Activated CD4-positive, alpha-beta T cell treated with anti-CD3 and anti-CD28 coated beads for 36 hours (primary cell): ENCODE measurements at regions of chr3 and their contacts with region 1.

Region 1: GRCh38 chr3:49377483-49377882 is 19.3 kb upstream of the GPX1 start:
- DNase-seq: peak; percentile 85
- ATAC-seq: peak; percentile 96
- H3K4me3 Mint-ChIP-seq: no peak overlapping the region
- H3K27ac Mint-ChIP-seq: peak overlapping the region; percentile 91
- H3K4me1 Mint-ChIP-seq: peaks cover 42% of the 10 kb centered on the region
- H3K27me3 Mint-ChIP-seq: no peaks in the 10 kb centered on the region

Region 2: GRCh38 chr3:49021813-49022687 is 355.4 kb before region 1 on chr3 and contains the start of gene NDUFAF3:
- CTCF ChIA-PET with region 1: no interaction called
- POLR2A ChIA-PET with region 1: no interaction called
- intact Hi-C with region 1: no loop called
- DNase-seq: peak; percentile 96
- ATAC-seq: peak; percentile 78
- H3K4me3 Mint-ChIP-seq: peak within 1 kb of the TSS; percentile 95
- H3K27ac Mint-ChIP-seq: peak within 1 kb of the TSS; percentile 96
- H3K4me1 Mint-ChIP-seq: peaks cover 60% of the 10 kb centered on the region
- H3K27me3 Mint-ChIP-seq: no peaks in the 10 kb centered on the region
- total RNA-seq, gene NDUFAF3: 90.8 to 108 TPM

Region 3: GRCh38 chr3:49199239-49199899 is 178.1 kb before region 1 on chr3:
- CTCF ChIA-PET with region 1: no interaction called
- POLR2A ChIA-PET with region 1: interaction called, 10 read pairs
- intact Hi-C with region 1: no loop called
- DNase-seq: peak; percentile 48
- ATAC-seq: peak; percentile 39
- H3K4me3 Mint-ChIP-seq: no peak overlapping the region
- H3K27ac Mint-ChIP-seq: no peak overlapping the region
- H3K4me1 Mint-ChIP-seq: no peaks in the 10 kb centered on the region
- H3K27me3 Mint-ChIP-seq: peaks cover 19% of the 10 kb centered on the region

Region 4: DNA sequence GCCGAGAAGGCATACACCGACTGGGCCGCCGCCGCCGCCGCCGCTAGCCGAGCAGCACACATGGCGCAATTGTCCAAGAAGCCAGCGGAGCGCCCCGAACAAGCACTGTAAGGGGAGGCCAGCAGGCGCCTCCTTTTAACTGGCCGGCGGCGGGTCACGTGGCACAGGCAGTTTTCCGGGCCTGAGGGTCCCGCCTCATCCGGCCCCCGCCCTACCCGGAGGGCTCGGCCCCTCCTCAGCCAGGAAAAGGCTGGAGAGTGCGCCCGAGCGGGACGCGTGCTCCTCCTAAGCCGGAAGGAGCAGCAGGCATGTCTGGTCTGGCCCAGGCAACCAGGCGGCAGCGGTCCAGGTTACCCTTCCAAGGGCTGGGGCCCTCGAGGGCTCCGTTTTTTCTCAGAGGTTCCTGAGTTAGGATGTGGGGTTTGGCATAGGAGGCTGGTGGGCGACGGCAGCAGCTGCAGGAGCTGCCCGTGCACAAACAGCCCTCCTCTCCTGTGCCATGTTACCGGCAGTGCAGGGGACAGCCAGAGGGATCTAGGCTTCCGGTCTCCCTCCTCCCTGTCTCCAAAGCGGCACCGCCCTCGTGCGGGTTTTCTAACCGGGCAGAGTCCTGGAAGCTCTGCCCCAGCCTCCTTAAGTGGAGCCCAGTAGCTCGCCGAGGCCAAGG is 19.1 kb before region 1 on chr3 and contains the start of gene GPX1:
- CTCF ChIA-PET with region 1: interaction called, 3 read pairs
- POLR2A ChIA-PET with region 1: interaction called, 4 read pairs
- intact Hi-C with region 1: loop called in 1 of 2 experiments (anchors 1 kb)
- DNase-seq: peak; percentile 92
- ATAC-seq: peak; percentile 85
- H3K4me3 Mint-ChIP-seq: peak within 1 kb of the TSS; percentile 94
- H3K27ac Mint-ChIP-seq: peak within 1 kb of the TSS; percentile 98
- H3K4me1 Mint-ChIP-seq: peaks cover 18% of the 10 kb centered on the region
- H3K27me3 Mint-ChIP-seq: no peaks in the 10 kb centered on the region
- total RNA-seq, gene GPX1: 182 to 306 TPM

Region 5: GRCh38 chr3:49469936-49470713 is 92.6 kb after region 1 on chr3 and contains the start of gene DAG1:
- CTCF ChIA-PET with region 1: no interaction called
- POLR2A ChIA-PET with region 1: no interaction called
- intact Hi-C with region 1: no loop called
- DNase-seq: peak; percentile 98
- ATAC-seq: peak; percentile 92
- H3K4me3 Mint-ChIP-seq: peak within 1 kb of the TSS; percentile 81
- H3K27ac Mint-ChIP-seq: peak within 1 kb of the TSS; percentile 92
- H3K4me1 Mint-ChIP-seq: peaks cover 20% of the 10 kb centered on the region
- H3K27me3 Mint-ChIP-seq: no peaks in the 10 kb centered on the region
- total RNA-seq, gene DAG1: 9.0 to 9.2 TPM